ENCODE measurements at regions of chr7 and their contacts with region 1.

Region 1: GRCh38 chr7:142459551-142459963 is 201.7 kb upstream of the PRSS58 start:
- DNase-seq: peak; percentile 64
- H3K4me3 ChIP-seq: no peak overlapping the region; a peak in 1 of 4 replicates
- H3K27ac ChIP-seq: no peak overlapping the region
- H3K4me1 ChIP-seq: peaks cover 5 to 10% of the 10 kb centered on the region in 2 experiments; a peak in 2 of 4 replicates
- H3K27me3 ChIP-seq: no peaks in the 10 kb centered on the region
- CTCF ChIP-seq: peak; percentile 93
- EP300 ChIP-seq: no peak
- RAD21 ChIP-seq: peak; percentile 77

Region 2: DNA sequence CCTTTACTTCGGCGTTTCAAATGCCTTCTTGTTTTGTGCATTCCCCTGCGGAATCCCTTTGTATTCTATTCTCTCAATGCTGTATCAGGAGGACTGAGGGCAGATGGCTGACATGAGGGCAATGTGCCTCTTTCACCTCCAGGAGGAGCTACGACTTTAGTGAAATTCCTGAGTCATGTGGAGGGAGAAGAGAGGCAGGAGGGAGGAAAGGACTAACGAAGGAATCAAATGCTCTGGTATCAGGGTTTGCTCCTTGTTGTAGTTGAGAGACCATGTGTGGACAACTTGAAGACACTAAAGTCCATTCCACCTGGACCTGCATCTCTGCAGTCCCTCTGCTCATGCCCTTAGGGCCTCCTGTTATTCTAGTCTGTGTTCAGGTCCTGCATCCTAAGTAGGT is 161.5 kb before region 1 on chr7:
- CTCF ChIA-PET with region 1: no interaction called
- POLR2A ChIA-PET with region 1: no interaction called
- DNase-seq: peak; percentile 17
- H3K4me3 ChIP-seq: no peak overlapping the region
- H3K27ac ChIP-seq: no peak overlapping the region
- H3K4me1 ChIP-seq: no peaks in the 10 kb centered on the region
- H3K27me3 ChIP-seq: peaks cover 43% of the 10 kb centered on the region
- CTCF ChIP-seq: peak; percentile 48
- EP300 ChIP-seq: no peak
- RAD21 ChIP-seq: no peak

Region 3: DNA sequence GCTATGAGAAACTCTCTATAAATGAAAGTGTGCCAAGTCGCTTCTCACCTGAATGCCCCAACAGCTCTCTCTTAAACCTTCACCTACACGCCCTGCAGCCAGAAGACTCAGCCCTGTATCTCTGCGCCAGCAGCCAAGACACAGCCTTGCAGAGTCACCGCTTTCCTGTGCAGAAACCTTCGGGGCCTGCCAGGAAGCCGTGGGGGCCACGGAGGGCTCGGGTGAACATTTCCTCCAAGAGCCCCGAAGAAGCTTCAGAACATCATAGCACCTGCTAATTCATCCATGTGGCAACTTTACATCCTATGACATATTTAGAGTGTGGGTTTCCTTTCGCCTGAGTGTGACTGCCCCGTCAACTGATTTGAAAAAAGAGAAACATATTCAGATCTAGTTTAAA is 146.0 kb before region 1 on chr7:
- CTCF ChIA-PET with region 1: no interaction called
- POLR2A ChIA-PET with region 1: no interaction called
- DNase-seq: no peak
- H3K4me3 ChIP-seq: no peak overlapping the region
- H3K27ac ChIP-seq: no peak overlapping the region
- H3K4me1 ChIP-seq: no peaks in the 10 kb centered on the region
- H3K27me3 ChIP-seq: peaks cover 57% of the 10 kb centered on the region; the same call in 1 of the 2 replicates
- CTCF ChIP-seq: no peak
- EP300 ChIP-seq: no peak
- RAD21 ChIP-seq: no peak

Region 4: DNA sequence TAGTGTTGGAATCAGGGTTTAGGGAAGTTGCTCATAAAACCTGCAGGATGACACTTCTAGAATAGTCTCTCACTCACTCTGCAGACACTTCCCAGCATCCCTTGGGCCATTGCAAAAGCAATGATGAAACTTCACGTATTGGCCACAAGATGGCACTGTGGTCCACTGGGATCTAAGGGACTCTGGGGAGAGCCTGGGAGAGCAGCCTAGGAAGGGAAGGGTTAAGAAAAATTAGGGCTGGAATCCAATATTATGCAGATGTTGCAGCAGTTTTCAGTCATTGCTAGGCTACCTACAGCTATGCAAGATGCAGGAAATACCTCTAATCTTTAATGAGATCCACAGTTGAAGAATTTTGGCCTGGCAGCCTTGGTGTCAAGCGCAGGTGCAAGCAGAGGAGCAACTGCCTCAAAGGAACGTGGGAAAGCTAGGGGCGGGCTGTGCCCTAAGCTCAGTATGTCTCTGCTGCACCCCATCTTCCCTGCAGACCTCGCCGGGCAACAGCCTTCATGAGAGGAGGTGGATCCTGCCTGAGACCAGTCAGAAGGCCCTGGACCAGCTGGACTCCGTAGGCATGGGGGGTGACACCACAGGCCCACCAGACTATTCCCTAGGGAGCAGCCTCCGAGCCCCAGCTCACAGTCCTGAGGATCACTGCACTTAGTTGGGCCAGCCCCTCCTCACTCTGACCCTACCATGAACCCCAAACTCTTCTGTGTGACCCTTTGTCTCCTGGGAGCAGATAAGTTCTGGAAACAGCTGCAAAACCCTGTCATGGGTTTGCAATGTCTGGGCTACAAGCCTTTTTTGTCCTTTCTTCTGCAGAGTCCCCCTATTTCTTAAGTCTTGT is 73.8 kb before region 1 on chr7:
- CTCF ChIA-PET with region 1: interaction called, 16 read pairs
- POLR2A ChIA-PET with region 1: no interaction called
- DNase-seq: peak; percentile 62
- H3K4me3 ChIP-seq: no peak overlapping the region
- H3K27ac ChIP-seq: no peak overlapping the region
- H3K4me1 ChIP-seq: peaks cover 0 to 15% of the 10 kb centered on the region in 2 experiments; a peak in 1 of 4 replicates
- H3K27me3 ChIP-seq: no peaks in the 10 kb centered on the region
- CTCF ChIP-seq: peak; percentile 87
- EP300 ChIP-seq: no peak
- RAD21 ChIP-seq: peak; percentile 65

Region 5: DNA sequence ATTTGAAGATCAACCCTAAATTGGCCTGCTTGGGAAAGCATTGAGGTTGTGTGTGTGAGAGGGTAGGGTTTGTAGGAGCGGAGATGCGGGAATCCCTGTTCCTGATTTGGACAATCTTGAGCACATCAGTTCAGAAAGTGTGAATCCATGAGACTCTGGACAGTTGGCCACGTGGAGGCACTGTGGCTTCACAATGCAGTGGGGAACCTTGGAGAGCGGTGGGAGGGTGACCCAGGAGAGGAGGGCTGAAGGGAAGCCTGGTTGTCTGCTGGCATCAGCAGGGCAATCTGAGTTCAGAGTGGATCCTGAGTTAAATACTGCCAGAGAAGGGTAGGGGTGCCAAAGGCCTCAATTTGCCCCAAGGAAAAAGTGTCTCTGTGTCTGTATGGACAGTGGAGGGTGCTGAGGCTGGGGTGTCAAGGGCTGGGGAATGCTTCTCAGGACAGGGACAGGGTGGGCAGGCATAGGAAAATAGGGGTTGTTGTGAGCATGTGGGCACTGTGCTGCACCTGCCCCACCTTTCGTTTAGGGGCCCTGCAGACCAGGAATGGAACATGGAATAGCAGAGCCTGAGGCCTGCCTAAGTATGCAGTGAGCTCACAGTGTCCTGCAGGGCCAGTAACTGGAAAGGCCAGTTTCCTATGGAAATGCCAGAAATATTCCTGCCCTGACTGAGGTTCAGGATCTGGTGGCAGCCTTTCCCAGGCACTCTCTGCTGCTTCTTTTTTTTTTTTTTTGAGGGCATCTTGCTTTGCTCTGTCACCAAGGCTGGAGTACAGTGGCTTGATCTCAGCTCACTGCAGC is 38.8 kb before region 1 on chr7:
- CTCF ChIA-PET with region 1: interaction called, 19 read pairs
- POLR2A ChIA-PET with region 1: no interaction called
- DNase-seq: peak; percentile 38
- H3K4me3 ChIP-seq: no peak overlapping the region
- H3K27ac ChIP-seq: no peak overlapping the region
- H3K4me1 ChIP-seq: peaks cover 0 to 3% of the 10 kb centered on the region in 2 experiments; a peak in 1 of 4 replicates
- H3K27me3 ChIP-seq: no peaks in the 10 kb centered on the region
- CTCF ChIP-seq: peak; percentile 72
- EP300 ChIP-seq: no peak
- RAD21 ChIP-seq: peak; percentile 70

Region 6: GRCh38 chr7:142469696-142470543 is 10.4 kb after region 1 on chr7:
- CTCF ChIA-PET with region 1: interaction called, 35 read pairs
- POLR2A ChIA-PET with region 1: no interaction called
- DNase-seq: no peak
- H3K4me3 ChIP-seq: no peak overlapping the region
- H3K27ac ChIP-seq: no peak overlapping the region
- H3K4me1 ChIP-seq: no peaks in the 10 kb centered on the region
- H3K27me3 ChIP-seq: no peaks in the 10 kb centered on the region
- CTCF ChIP-seq: no peak
- EP300 ChIP-seq: no peak
- RAD21 ChIP-seq: no peak

Region 7: DNA sequence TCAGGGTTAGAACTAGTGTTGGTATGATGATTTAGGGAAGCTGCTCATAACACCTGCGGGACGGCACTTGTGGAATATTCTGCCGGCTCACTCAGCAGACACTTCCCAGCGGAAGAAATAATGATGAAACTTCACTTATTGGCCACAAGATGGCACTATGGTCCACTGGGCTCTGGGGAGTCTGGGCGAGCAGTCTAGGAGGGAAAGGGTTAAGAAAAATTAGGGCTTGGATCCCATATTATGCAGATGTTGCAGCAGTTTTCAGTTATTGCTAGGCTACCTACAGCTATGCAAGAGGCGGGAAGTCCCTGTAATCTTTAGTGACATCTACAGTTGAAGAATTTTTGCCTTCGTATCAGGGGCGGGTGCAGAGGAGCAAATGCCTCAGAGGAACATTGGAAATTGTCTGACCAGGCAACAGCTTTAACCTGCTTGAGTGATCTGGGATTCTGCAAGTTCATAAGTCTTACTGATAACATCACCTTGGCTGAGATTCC is 37.0 kb after region 1 on chr7:
- CTCF ChIA-PET with region 1: interaction called, 31 read pairs
- POLR2A ChIA-PET with region 1: no interaction called
- DNase-seq: peak; percentile 67
- H3K4me3 ChIP-seq: no peak overlapping the region
- H3K27ac ChIP-seq: no peak overlapping the region
- H3K4me1 ChIP-seq: peaks cover 0 to 3% of the 10 kb centered on the region in 2 experiments; a peak in 1 of 4 replicates
- H3K27me3 ChIP-seq: peaks cover 21% of the 10 kb centered on the region; the same call in 1 of the 2 replicates
- CTCF ChIP-seq: peak; percentile 95
- EP300 ChIP-seq: no peak
- RAD21 ChIP-seq: peak; percentile 69

Region 8: DNA sequence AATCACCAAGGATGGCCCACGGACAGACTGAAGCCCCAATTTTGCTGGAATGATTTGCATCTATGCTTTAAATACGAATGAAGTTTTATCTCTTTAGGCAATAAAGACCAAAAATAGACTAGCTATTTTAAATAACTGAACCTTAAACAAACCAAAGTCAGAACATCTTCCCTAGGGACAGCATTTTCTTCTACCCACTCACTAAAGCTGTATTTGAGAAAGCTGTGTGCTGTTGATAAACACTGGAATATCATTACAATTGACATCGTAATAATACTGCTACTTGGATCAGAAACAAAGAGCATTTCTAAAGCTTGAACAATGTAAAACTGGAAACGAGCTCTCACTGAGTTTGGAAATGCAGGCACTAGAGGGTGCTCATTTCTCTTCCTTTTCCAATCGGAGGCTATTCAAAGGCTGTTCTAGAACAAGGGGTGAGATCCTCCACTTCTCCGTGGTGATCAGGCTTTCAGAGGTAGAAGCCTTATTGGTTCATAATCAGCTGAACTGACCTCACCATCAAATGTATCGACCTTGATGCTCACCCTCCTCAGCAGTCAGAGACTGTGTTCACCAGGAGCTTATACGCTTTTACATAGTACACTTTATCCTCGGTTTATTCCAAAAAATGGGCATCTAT is 64.4 kb after region 1 on chr7:
- CTCF ChIA-PET with region 1: interaction called, 19 read pairs
- POLR2A ChIA-PET with region 1: no interaction called
- DNase-seq: no peak
- H3K4me3 ChIP-seq: no peak overlapping the region
- H3K27ac ChIP-seq: no peak overlapping the region
- H3K4me1 ChIP-seq: peaks cover 0 to 11% of the 10 kb centered on the region in 2 experiments; a peak in 2 of 4 replicates
- H3K27me3 ChIP-seq: peaks cover 63% of the 10 kb centered on the region; the same call in 1 of the 2 replicates
- CTCF ChIP-seq: peak; percentile 39; the same call in 1 of the 2 replicates
- EP300 ChIP-seq: no peak
- RAD21 ChIP-seq: peak; percentile 14; the same call in 1 of the 2 replicates